Panc1 (cell line): ENCODE measurements at regions of chr1 and their contacts with region 1.

Region 1: DNA sequence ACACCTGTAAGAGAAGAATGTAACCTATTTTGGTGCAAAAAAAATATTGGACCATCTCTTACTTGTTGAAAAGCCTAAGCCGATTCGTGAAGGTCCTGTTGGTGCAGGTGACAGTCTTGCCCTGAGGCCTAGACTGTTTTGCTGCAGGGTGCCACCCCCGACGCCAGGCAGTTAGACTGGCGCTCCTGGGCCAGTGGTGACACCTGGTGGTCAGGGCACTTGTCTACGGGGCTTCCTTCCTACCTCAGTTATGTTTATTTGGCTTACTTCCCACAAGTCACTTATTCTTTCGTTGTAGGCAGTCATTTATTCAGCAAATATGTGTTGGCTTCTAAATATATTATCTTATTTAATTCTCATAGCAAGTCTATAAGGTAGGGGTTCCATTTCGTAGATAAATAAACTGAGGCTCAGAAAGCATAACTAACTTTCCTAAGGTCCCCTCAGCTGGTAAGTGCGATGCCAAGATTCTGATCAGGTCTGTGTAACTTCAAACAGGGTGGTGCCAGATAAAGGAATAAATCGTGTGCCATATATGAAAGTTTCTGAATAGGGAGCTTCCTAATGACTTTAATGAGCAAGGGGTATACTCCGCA is 1.9 kb downstream of the EEIG2 start:
- DNase-seq: peak; percentile 46
- ATAC-seq: peak; percentile 83
- H3K4me3 ChIP-seq: peak overlapping the region in 1 of 2 experiments; percentile 11; a peak in 1 of 4 replicates
- H3K27ac ChIP-seq: no peak overlapping the region
- H3K4me1 ChIP-seq: peaks cover 6% of the 10 kb centered on the region
- H3K27me3 ChIP-seq: no peaks in the 10 kb centered on the region
- CTCF ChIP-seq: peak; percentile 86

Region 2: DNA sequence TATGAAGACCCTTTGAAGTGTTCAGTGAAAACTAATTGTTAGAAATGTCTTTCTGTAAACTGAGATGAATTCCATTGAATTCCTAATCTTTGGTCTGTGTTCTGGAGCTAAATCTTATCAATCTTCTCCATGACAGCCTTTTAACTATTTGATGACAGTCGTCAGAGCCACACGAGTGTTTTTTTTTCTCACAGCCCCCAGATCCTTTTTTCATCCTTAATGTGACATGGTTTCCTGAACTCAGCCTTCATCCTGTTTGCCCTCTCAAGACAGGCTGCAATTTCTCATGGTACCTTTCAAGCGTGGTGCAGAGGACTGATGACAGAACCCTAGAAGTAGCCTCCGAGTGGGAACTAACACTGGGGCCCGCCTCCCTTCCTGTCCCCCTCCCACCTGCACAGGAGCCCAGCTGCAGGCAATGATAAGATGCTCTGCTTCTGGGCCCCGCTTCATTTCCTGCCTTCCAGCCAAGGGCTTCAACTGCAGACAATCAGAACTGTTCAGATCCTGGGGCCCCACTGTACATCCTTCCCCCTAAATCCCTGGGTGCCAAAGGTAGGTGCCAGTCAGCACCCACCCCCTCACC is 482.3 kb before region 1 on chr1:
- CTCF ChIA-PET with region 1: no interaction called
- POLR2A ChIA-PET with region 1: no interaction called
- in situ Hi-C with region 1: no loop called
- intact Hi-C with region 1: no loop called
- DNase-seq: no peak
- ATAC-seq: no peak
- H3K4me3 ChIP-seq: no peak overlapping the region
- H3K27ac ChIP-seq: no peak overlapping the region
- H3K4me1 ChIP-seq: no peaks in the 10 kb centered on the region
- H3K27me3 ChIP-seq: no peaks in the 10 kb centered on the region
- CTCF ChIP-seq: no peak

Region 3: DNA sequence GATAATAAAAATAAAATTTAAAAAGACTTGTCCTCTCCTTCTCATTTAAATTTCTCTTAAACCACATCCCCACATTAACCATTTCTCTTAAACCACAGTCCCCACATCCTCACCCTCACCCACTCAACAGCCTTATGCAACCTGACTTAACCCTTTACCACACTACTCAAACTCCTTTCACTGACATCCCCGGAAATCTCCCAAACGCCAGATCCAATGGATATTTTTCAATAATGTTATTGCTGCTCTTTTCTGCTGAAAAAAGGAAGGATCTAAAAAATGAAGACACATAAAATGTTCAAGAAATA is 56.1 kb before region 1 on chr1:
- CTCF ChIA-PET with region 1: no interaction called
- POLR2A ChIA-PET with region 1: no interaction called
- in situ Hi-C with region 1: no loop called
- intact Hi-C with region 1: loop called (anchors 2 kb)
- DNase-seq: no peak
- ATAC-seq: no peak
- H3K4me3 ChIP-seq: no peak overlapping the region
- H3K27ac ChIP-seq: no peak overlapping the region
- H3K4me1 ChIP-seq: no peaks in the 10 kb centered on the region
- H3K27me3 ChIP-seq: no peaks in the 10 kb centered on the region
- CTCF ChIP-seq: no peak